ENCODE measurements at regions of chr9 and their contacts with region 1.

Region 1: GRCh38 chr9:110217656-110218099 is 9.7 kb upstream of the C9orf152 start:
- DNase-seq: no peak
- ATAC-seq: no peak
- H3K4me3 ChIP-seq: no peak overlapping the region
- H3K27ac ChIP-seq: no peak overlapping the region
- H3K4me1 ChIP-seq: no peaks in the 10 kb centered on the region
- H3K27me3 ChIP-seq: no peaks in the 10 kb centered on the region
- CTCF ChIP-seq: peak; percentile 42 to 78 (median 66)
- POLR2A ChIP-seq: no peak

Region 2: GRCh38 chr9:109894921-109895758 is 322.5 kb before region 1 on chr9:
- in situ Hi-C with region 1: loop called in 2 of 4 experiments (anchors 10 kb)
- intact Hi-C with region 1: loop called (anchors 5 kb)
- DNase-seq: no peak
- ATAC-seq: no peak
- H3K4me3 ChIP-seq: no peak overlapping the region
- H3K27ac ChIP-seq: peak overlapping the region in 2 of 4 donors; percentile 16 to 23
- H3K4me1 ChIP-seq: peaks cover 3 to 4% of the 10 kb centered on the region in 2 donors
- H3K27me3 ChIP-seq: no peaks in the 10 kb centered on the region
- CTCF ChIP-seq: no peak
- POLR2A ChIP-seq: no peak

Measured in gastrocnemius medialis (tissue), 4 donors.